Gastrocnemius medialis (tissue), 4 donors: ENCODE measurements at regions of chr4 and their contacts with region 1.

Region 1: GRCh38 chr4:184733654-184734524 is at the start of gene CENPU:
- DNase-seq: peak; percentile 92 to 97
- ATAC-seq: peak; percentile 98 to 99
- H3K4me3 ChIP-seq: peak within 1 kb of the TSS; percentile 64 to 89 (median 80)
- H3K27ac ChIP-seq: peak within 1 kb of the TSS; percentile 73 to 81 (median 76)
- H3K4me1 ChIP-seq: peaks cover 11 to 12% of the 10 kb centered on the region in 2 donors
- H3K27me3 ChIP-seq: no peaks in the 10 kb centered on the region
- CTCF ChIP-seq: peak in 2 of 5 experiments; percentile 31 to 51
- POLR2A ChIP-seq: peak; percentile 9 to 20
- total RNA-seq, gene CENPU: 0.75 to 2.7 (median 2.2) TPM in 3 of 4 donors, not detected in the other

Region 2: DNA sequence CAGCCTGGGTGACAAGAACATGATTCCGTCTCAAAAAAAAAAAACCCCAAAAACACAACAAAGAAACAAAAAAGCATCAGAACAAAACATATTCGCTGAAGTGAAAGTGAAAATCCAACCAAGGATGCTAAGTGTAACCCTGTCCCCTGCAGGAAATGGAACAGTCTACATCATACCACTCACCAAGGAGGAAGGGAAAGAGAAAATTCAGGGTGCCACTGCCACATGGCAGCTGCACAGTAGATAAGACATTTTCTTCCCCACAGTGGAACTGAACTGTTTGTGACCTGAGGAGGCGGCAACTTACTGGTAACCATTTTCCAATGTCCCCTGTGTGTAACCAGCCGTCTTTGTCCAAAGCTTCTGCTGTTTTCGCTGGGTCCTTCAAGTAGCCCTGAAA is 28.2 kb after region 1 on chr4:
- in situ Hi-C with region 1: no loop called
- intact Hi-C with region 1: no loop called
- DNase-seq: no peak
- ATAC-seq: no peak
- H3K4me3 ChIP-seq: no peak overlapping the region
- H3K27ac ChIP-seq: peak overlapping the region; percentile 66 to 83 (median 71)
- H3K4me1 ChIP-seq: peaks cover 53 to 75% of the 10 kb centered on the region in 2 donors
- H3K27me3 ChIP-seq: no peaks in the 10 kb centered on the region
- CTCF ChIP-seq: no peak
- POLR2A ChIP-seq: no peak

Region 3: GRCh38 chr4:184825896-184826690 is 92.2 kb after region 1 on chr4 and contains the start of gene ACSL1:
- in situ Hi-C with region 1: no loop called
- intact Hi-C with region 1: loop called (anchors 5 kb)
- DNase-seq: peak; percentile 80 to 91
- ATAC-seq: peak; percentile 74 to 76
- H3K4me3 ChIP-seq: peak within 1 kb of the TSS; percentile 64 to 91 (median 73)
- H3K27ac ChIP-seq: peak within 1 kb of the TSS; percentile 97 to 100 (median 98)
- H3K4me1 ChIP-seq: peaks cover 36 to 42% of the 10 kb centered on the region in 2 donors
- H3K27me3 ChIP-seq: no peaks in the 10 kb centered on the region
- CTCF ChIP-seq: no peak
- POLR2A ChIP-seq: peak; percentile 99
- total RNA-seq, gene ACSL1: 591 to 2,181 (median 1,316) TPM

Region 4: DNA sequence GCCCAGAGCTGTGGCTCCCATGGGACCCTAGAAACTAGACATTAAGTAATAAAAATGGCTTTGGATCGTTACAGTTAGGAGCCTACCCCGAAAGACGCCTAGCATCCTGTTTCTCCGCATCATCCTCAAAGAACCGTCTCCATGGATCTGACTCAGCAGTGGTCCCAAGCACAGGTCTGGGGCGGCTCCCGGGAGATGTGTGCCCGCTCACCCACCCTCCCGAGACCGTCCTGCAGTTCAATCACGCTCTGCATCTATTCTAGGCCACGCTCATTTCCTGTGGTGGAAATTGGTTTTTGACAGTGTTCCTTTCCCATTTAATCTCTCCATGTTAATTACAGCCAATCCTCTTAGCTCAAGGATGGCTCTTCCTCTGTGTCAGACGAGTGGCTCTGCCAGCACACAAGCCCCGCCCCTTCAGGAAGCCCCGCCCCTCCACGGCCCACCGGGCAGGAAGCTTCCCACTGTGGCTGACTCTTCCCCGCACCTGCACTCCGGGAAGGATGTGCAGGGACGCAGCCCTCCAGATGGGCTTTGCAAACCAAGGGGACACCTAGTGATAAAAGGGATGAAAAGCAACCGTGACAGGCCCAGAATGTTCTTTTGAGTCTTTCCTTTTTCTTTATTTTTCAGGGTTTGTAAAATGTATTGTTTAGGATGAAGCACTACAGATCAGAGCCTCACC is 249.9 kb after region 1 on chr4:
- in situ Hi-C with region 1: loop called in 3 of 4 experiments (anchors 25 kb)
- intact Hi-C with region 1: no loop called
- DNase-seq: peak; percentile 6 to 44
- ATAC-seq: peak in 1 of 2 donors; percentile 62
- H3K4me3 ChIP-seq: no peak overlapping the region
- H3K27ac ChIP-seq: no peak overlapping the region
- H3K4me1 ChIP-seq: no peaks in the 10 kb centered on the region
- H3K27me3 ChIP-seq: no peaks in the 10 kb centered on the region
- CTCF ChIP-seq: peak in 4 of 5 experiments; percentile 21 to 43 (median 33)
- POLR2A ChIP-seq: no peak

Region 5: DNA sequence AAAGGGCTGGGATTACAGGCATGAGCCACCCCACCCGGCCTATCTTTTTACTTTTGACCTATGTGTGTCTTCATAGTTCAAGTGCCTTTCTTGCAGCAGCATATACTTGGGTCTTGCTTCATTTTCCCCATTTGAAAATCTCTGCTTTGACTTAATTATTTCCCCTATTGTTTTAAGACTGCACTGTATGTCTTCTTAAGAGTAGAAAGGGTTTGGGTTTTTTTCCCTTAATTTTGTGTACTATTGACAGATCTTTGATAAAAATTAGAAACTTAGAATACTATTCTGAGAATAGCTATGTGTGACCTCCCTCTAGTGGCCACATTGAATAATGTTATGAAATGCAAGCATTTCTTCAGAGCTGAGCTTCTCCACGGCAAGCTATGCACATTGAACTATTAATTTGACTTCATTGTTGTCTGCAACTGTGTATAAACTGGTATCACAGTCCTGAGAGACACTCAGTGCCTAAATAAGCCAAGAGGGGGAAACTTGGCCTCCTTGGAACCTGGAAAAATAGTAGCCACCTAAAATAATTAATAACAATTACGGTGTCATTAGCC is 400.5 kb after region 1 on chr4:
- in situ Hi-C with region 1: no loop called
- intact Hi-C with region 1: loop called (anchors 10 kb)
- DNase-seq: no peak
- ATAC-seq: peak; percentile 71 to 83
- H3K4me3 ChIP-seq: no peak overlapping the region
- H3K27ac ChIP-seq: peak overlapping the region in 2 of 4 donors; percentile 35 to 44
- H3K4me1 ChIP-seq: peaks cover 2 to 12% of the 10 kb centered on the region in 2 donors
- H3K27me3 ChIP-seq: no peaks in the 10 kb centered on the region
- CTCF ChIP-seq: peak; percentile 75 to 89 (median 77)
- POLR2A ChIP-seq: no peak